Aorta (tissue), 5 donors: ENCODE measurements at regions of chr3 and their contacts with region 1.

Region 1: DNA sequence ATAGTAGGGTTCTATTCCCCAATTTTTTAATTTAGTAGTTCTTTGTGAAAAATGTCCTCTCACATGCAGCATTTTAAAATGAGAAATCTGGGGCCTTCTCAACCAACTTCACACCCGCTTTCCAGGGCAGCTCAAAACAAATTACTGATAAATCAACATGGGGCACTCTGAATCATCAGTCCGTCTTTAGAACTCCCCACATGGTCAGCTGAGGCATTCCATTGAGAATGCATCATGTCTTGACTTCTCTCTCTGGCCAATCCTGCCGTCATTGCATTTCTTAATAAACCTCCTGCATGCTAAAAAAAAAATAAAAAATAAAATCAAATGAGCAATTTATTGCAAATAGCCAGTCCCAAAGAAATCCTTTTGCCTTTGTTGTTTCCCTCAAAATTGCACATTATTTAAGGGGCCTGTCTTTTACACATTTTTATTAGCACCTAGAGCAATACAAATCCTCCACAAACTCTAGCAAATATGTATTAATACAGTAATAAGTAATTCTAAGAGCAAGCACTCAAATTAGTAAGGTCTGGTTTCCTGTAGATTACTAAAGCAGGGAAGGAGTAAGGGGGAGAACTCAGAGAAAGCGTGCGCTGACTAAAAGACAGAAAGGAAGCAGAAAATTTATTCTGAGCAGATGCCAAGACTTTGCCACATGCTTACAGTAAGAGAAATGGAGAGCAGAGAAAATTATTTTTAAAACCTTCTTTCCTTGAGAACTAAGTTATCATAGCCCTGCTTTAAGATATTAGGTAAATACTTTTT is 175.7 kb downstream of the TNIK start:
- DNase-seq: peak in 1 of 2 donors; percentile 57
- ATAC-seq: peak; percentile 91
- H3K4me3 ChIP-seq: no peak overlapping the region
- H3K27ac ChIP-seq: peak overlapping the region in 1 of 2 donors; percentile 98
- H3K4me1 ChIP-seq: peaks cover 0 to 13% of the 10 kb centered on the region in 2 donors
- H3K27me3 ChIP-seq: no peaks in the 10 kb centered on the region

Region 2: GRCh38 chr3:171187706-171188290 is 96.7 kb before region 1 on chr3:
- intact Hi-C with region 1: loop called in 1 of 2 experiments (anchors 5 kb)
- DNase-seq: no peak
- ATAC-seq: peak; percentile 63
- H3K4me3 ChIP-seq: no peak overlapping the region
- H3K27ac ChIP-seq: no peak overlapping the region
- H3K4me1 ChIP-seq: peaks cover 0 to 5% of the 10 kb centered on the region in 2 donors
- H3K27me3 ChIP-seq: no peaks in the 10 kb centered on the region

Region 3: GRCh38 chr3:171248425-171249111 is 35.9 kb before region 1 on chr3:
- intact Hi-C with region 1: no loop called
- DNase-seq: no peak
- ATAC-seq: no peak
- H3K4me3 ChIP-seq: no peak overlapping the region
- H3K27ac ChIP-seq: no peak overlapping the region
- H3K4me1 ChIP-seq: no peaks in the 10 kb centered on the region
- H3K27me3 ChIP-seq: no peaks in the 10 kb centered on the region

Region 4: GRCh38 chr3:171262431-171262830 is 22.1 kb before region 1 on chr3:
- intact Hi-C with region 1: loop called in 1 of 2 experiments (anchors 2 kb)
- DNase-seq: no peak
- ATAC-seq: no peak
- H3K4me3 ChIP-seq: no peak overlapping the region
- H3K27ac ChIP-seq: no peak overlapping the region
- H3K4me1 ChIP-seq: peaks cover 6 to 20% of the 10 kb centered on the region in 2 donors
- H3K27me3 ChIP-seq: no peaks in the 10 kb centered on the region

Region 5: GRCh38 chr3:171334465-171334811 is 49.9 kb after region 1 on chr3:
- intact Hi-C with region 1: loop called in 1 of 2 experiments (anchors 10 kb)
- DNase-seq: no peak
- ATAC-seq: peak; percentile 49
- H3K4me3 ChIP-seq: no peak overlapping the region
- H3K27ac ChIP-seq: peak overlapping the region in 1 of 2 donors; percentile 78
- H3K4me1 ChIP-seq: peaks cover 2% of the 10 kb centered on the region in 2 donors
- H3K27me3 ChIP-seq: no peaks in the 10 kb centered on the region